ENCODE measurements at regions of chr16 and their contacts with region 1.

Region 1: GRCh38 chr16:67480833-67481560 is at the start of gene ATP6V0D1:
- DNase-seq: peak; percentile 99
- H3K4me3 Mint-ChIP-seq: peak within 1 kb of the TSS; percentile 100
- H3K27ac Mint-ChIP-seq: peak within 1 kb of the TSS; percentile 99
- H3K4me1 Mint-ChIP-seq: peaks cover 42% of the 10 kb centered on the region
- H3K27me3 Mint-ChIP-seq: no peaks in the 10 kb centered on the region
- total RNA-seq, gene ATP6V0D1: 11.9 to 15.3 TPM

Region 2: GRCh38 chr16:67499106-67499505 is 18.1 kb after region 1 on chr16:
- CTCF ChIA-PET with region 1: interaction called, 15 read pairs
- intact Hi-C with region 1: loop called (anchors 1 kb)
- DNase-seq: no peak
- H3K4me3 Mint-ChIP-seq: no peak overlapping the region
- H3K27ac Mint-ChIP-seq: no peak overlapping the region
- H3K4me1 Mint-ChIP-seq: peaks cover 12% of the 10 kb centered on the region
- H3K27me3 Mint-ChIP-seq: no peaks in the 10 kb centered on the region

Region 3: GRCh38 chr16:67521095-67521804 is 40.3 kb after region 1 on chr16:
- CTCF ChIA-PET with region 1: interaction called, 69 read pairs
- intact Hi-C with region 1: loop called (anchors 1 kb)
- DNase-seq: peak; percentile 100
- H3K4me3 Mint-ChIP-seq: peak overlapping the region; percentile 84
- H3K27ac Mint-ChIP-seq: peak overlapping the region; percentile 96
- H3K4me1 Mint-ChIP-seq: peaks cover 11% of the 10 kb centered on the region
- H3K27me3 Mint-ChIP-seq: no peaks in the 10 kb centered on the region

Region 4: GRCh38 chr16:67641779-67642708 is 161.0 kb after region 1 on chr16:
- CTCF ChIA-PET with region 1: no interaction called
- intact Hi-C with region 1: loop called (anchors 1 kb)
- DNase-seq: no peak
- H3K4me3 Mint-ChIP-seq: no peak overlapping the region
- H3K27ac Mint-ChIP-seq: no peak overlapping the region
- H3K4me1 Mint-ChIP-seq: peaks cover 9% of the 10 kb centered on the region
- H3K27me3 Mint-ChIP-seq: no peaks in the 10 kb centered on the region

Region 5: DNA sequence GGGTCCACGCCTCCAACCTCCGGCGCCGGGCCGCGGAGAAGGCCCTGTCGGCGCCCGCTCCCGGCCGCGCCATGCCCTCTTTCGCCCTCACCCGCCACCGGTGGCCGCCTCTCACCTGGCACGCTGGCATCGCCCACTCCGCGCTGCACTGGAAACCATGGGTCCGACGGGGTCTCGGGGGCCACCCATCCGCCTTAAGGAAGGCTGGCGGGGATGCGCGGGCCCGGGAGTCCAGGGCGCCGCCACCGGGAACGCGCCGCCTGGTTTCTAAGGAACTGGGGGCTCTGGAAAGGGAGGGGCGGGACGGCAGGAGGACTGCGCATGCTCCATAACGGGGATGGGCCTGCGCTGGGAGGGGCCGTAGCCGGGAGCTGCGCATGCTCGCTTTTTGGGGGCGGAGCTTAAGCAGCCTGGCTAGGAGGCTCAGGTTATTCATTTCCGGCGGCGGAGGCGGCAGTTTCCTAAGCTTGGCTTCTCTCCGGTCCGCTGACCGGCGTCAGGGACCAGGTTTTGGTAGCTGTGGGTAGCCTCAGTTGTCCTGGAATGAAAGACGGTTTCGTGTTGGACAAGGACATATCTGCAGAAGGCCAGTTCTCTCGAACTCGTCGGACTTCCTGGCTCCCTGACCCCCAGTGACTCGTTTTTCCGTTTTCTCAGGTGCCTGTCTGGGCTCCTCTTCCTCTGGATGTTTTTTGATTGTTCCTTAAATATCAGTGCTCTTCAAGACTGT is 238.2 kb after region 1 on chr16 and contains the start of gene GFOD2:
- CTCF ChIA-PET with region 1: no interaction called
- intact Hi-C with region 1: loop called (anchors 1 kb)
- DNase-seq: peak; percentile 99
- H3K4me3 Mint-ChIP-seq: peak within 1 kb of the TSS; percentile 96
- H3K27ac Mint-ChIP-seq: peak within 1 kb of the TSS; percentile 96
- H3K4me1 Mint-ChIP-seq: peaks cover 36% of the 10 kb centered on the region
- H3K27me3 Mint-ChIP-seq: no peaks in the 10 kb centered on the region
- total RNA-seq, gene GFOD2: 7.3 to 8.2 TPM

Measured in activated naive CD4-positive, alpha-beta T cell treated with anti-CD3 and anti-CD28 coated beads for 36 hours (primary cell).